Dorsolateral prefrontal cortex (tissue), 120 donors: ENCODE measurements at regions of chr2 and their contacts with region 1.

Region 1: GRCh38 chr2:219597552-219598307 is at the start of gene STK11IP:
- DNase-seq: peak; percentile 92 to 98 (median 96)
- H3K4me3 ChIP-seq: peak within 1 kb of the TSS; percentile 59 to 98 (median 84)
- H3K27ac ChIP-seq: peak within 1 kb of the TSS; percentile 34 to 97 (median 92)
- H3K27me3 ChIP-seq: no peaks in the 10 kb centered on the region
- CTCF ChIP-seq: peak in 24 of 56 donors; percentile 3 to 49 (median 21)
- total RNA-seq, gene STK11IP: 24.7 to 91.0 (median 46.3) TPM

Region 2: DNA sequence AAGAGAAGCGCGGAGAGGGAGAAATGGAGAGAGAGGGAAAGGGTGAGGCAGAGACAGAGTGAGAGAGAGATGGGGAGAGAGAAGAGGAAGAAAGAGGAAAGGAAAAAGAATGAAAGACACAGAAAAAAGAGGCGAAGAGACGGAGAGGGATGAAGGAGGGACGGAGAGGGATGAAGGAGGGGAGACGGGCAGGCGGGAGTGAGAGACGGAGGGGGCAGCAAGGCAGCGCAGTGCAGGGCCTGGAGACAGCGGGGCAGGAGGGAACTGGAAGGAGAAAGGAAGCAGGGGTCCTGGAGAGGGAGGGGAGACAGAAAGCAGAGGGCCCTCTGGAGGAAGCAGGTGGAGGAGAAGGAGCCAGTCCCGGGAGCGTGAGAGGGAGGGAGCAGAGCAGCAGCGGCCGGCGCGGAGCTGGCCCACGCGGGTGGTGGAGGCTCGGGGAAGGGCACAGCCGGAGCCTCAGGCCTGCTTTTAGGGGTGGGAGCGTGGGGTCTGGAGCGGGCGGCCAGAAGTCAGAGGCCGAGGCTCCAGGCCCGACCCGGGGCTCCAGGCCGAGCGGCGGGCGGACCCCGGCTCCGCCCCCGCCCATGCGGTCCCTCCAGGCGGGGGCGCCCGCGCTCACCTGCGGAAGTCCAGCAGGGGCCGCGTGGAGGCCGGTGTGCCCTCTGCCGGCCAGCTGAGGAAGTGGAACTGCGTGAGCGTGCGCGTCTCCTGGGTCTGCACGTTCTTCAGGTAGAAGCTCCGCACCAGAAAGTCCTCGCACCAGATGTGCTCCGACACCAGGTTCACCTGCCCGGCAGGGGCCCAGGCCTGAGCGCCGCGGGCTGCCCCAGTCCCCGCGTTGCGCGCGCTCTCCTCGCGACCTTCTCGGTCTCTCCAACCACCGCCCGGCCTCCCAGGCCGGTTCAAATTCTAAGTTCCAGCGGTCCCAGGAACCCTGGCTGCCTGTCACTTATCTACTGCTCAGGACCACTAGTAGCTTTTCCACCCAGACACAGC is 303.1 kb before region 1 on chr2:
- intact Hi-C with region 1: no loop called
- DNase-seq: peak; percentile 77 to 89 (median 82)
- H3K4me3 ChIP-seq: peak overlapping the region; percentile 29 to 79 (median 62)
- H3K27ac ChIP-seq: peak overlapping the region; percentile 55 to 100 (median 90)
- H3K27me3 ChIP-seq: no peaks in the 10 kb centered on the region
- CTCF ChIP-seq: peak; percentile 78 to 100 (median 100)

Region 3: GRCh38 chr2:219469186-219469724 is 128.5 kb before region 1 on chr2:
- intact Hi-C with region 1: no loop called
- DNase-seq: peak in 2 of 10 donors; percentile 33 to 63
- H3K4me3 ChIP-seq: no peak overlapping the region
- H3K27ac ChIP-seq: no peak overlapping the region
- H3K27me3 ChIP-seq: no peaks in the 10 kb centered on the region
- CTCF ChIP-seq: no peak

Region 4: DNA sequence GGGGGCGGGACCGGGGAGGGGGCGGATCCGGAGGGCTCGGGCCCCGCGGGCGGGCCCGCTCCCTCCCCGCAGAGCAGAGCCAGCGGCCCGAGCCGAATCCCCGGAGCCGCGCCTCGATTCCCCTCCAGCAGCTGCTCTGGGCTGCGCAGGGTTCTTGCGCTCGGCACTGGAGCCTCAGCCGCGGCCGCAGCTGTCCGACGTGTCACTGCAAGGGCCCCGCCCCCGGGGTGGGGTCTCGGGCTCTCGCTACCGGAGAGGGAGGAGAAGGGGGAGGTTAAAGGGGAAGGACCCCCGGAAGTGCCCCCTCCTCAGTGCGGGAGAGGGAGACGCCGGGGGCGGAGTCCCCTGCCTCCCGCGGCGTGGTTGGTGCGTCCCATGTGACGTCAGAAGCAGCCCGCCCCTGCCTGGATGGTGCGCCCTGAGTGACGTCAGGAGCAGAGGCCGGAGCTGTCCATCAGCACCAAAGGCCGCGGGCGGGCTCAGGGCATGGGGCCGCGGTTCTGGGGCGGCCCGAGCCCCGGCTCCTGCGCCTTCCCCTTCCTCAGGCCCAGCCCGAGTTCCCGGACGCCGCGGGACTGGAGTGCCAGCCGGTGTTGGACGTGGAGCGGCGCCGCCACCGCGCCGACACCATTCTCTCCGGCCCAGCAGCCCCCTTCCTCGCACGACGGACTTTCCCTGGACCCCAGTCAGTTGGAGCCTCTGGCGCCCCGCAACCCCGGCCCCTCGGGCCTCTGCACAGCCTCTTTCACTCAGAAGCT is 54.0 kb before region 1 on chr2 and contains the starts of genes CHPF and TMEM198:
- intact Hi-C with region 1: loop called (anchors 1 to 2 kb)
- DNase-seq: peak; percentile 97 to 100 (median 99)
- H3K4me3 ChIP-seq: peak within 1 kb of the TSS; percentile 55 to 95 (median 83)
- H3K27ac ChIP-seq: peak within 1 kb of the TSS; percentile 7 to 95 (median 88)
- H3K27me3 ChIP-seq: no peaks in the 10 kb centered on the region
- CTCF ChIP-seq: peak in 29 of 56 donors; percentile 8 to 56 (median 27)
- total RNA-seq, gene CHPF: 28.8 to 59.4 (median 41.7) TPM
- total RNA-seq, gene TMEM198: 8.5 to 24.9 (median 16.0) TPM

Region 5: GRCh38 chr2:219557791-219558785 is 39.6 kb before region 1 on chr2:
- intact Hi-C with region 1: loop called in 1 of 2 experiments (anchors 1 kb)
- DNase-seq: peak in 1 of 10 donors; percentile 33
- H3K4me3 ChIP-seq: no peak overlapping the region
- H3K27ac ChIP-seq: no peak overlapping the region
- H3K27me3 ChIP-seq: no peaks in the 10 kb centered on the region
- CTCF ChIP-seq: no peak

Region 6: GRCh38 chr2:219642465-219643080 is 44.8 kb after region 1 on chr2:
- intact Hi-C with region 1: loop called in 1 of 2 experiments (anchors 5 kb)
- DNase-seq: peak; percentile 89 to 98 (median 96)
- H3K4me3 ChIP-seq: peak overlapping the region in 6 of 59 donors; percentile 9 to 25 (median 12)
- H3K27ac ChIP-seq: peak overlapping the region in 15 of 59 donors; percentile 5 to 63 (median 38)
- H3K27me3 ChIP-seq: peaks cover 0 to under 1% (median 0%) of the 10 kb centered on the region in 45 donors
- CTCF ChIP-seq: peak; percentile 77 to 99 (median 97)

Region 7: GRCh38 chr2:219675221-219675620 is 77.5 kb after region 1 on chr2:
- intact Hi-C with region 1: no loop called
- DNase-seq: no peak
- H3K4me3 ChIP-seq: no peak overlapping the region
- H3K27ac ChIP-seq: no peak overlapping the region
- H3K27me3 ChIP-seq: peaks cover 0 to 17% (median 0%) of the 10 kb centered on the region in 45 donors
- CTCF ChIP-seq: no peak